HepG2 (cell line): ENCODE measurements at regions of chr12 and their contacts with region 1.

Region 1: DNA sequence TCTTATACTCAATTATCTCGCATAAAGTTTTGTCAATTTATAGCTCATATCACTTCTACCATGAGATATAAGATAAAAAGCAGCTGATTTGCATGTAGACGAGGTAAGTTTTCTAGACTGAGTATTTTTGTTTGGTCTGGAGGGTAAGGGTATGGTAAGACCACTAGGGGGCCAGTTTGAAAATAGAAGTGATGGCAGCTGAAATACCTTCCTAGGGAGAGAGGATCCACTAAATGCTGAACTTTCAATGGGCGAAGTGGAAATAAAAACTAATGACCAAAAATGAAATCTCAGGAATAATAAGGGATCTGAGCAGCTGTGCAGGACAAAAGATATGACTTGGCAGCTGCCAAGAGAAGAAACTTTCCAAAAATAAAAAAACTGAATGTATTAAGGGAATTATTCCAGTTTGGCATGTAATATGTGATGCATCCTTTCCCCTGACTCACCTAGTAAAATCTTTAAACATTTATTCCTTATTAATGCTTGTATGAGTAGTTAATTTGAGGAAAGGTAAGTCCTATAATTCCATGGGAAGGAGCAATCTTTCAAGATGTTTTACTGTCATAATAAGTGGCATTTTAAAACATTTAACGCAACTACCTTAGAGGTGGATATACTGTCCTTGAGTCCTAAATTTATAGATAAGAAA is 754.5 kb downstream of the C12orf50 start:
- DNase-seq: no peak
- ATAC-seq: peak; percentile 43; the same call in 1 of the 3 replicates
- H3K4me3 ChIP-seq: no peak overlapping the region
- H3K27ac ChIP-seq: no peak overlapping the region
- H3K4me1 ChIP-seq: no peaks in the 10 kb centered on the region
- H3K27me3 ChIP-seq: no peaks in the 10 kb centered on the region; a peak in 1 of 5 replicates
- CTCF ChIP-seq: no peak
- EP300 ChIP-seq: no peak
- POLR2A ChIP-seq: no peak
- RAD21 ChIP-seq: no peak

Region 2: GRCh38 chr12:87953256-87953860 is 678.6 kb after region 1 on chr12:
- CTCF ChIA-PET with region 1: no interaction called
- POLR2A ChIA-PET with region 1: no interaction called
- in situ Hi-C with region 1: no loop called
- intact Hi-C with region 1: loop called (anchors 1 kb)
- DNase-seq: peak; percentile 15
- ATAC-seq: peak; percentile 74
- H3K4me3 ChIP-seq: no peak overlapping the region
- H3K27ac ChIP-seq: no peak overlapping the region
- H3K4me1 ChIP-seq: peaks cover 18% of the 10 kb centered on the region
- H3K27me3 ChIP-seq: no peaks in the 10 kb centered on the region
- CTCF ChIP-seq: peak; percentile 59
- EP300 ChIP-seq: no peak
- POLR2A ChIP-seq: no peak
- RAD21 ChIP-seq: no peak